PC-3 (cell line): ENCODE measurements at regions of chr2 and their contacts with region 1.

Region 1: DNA sequence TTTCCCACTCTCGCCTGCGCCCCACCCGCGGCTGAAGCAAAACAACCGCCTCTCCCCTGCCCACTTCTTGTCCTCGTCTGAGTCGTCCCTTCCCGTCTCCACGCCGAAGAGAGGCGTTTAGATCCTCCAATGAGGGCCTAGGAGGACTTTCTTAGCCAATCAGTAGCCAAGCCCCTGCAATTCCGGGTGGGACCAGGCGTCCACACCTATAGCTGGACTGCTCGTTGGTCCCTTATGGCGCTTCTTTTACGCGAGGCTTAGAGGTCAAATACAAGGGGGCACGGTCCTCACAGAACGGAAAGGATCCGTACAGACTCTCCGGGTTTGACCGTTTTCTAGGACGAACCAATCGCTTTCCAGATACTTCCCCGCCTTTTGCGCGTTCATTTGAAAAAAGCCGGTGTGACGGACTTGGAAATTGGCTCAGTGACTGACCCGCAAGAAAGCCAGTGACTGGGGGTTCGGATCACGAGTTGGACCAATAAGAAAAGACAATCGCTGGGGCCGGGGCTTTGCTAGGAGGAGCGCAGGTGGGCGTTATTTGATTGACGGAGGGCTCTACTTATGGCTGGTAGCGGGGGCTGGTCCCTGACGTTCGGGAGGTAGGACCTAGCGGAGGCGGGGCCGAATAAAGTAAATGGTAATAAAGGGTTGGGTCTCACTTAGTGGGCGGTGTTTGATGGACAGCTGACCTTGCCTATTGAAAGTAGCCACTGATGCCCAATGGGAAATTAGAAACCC is 565 bp upstream of the PPM1B start:
- DNase-seq: peak; percentile 99
- ATAC-seq: peak; percentile 84
- H3K4me3 ChIP-seq: peak overlapping the region; percentile 76
- H3K27ac ChIP-seq: peak overlapping the region; percentile 85
- H3K4me1 ChIP-seq: peaks cover 16% of the 10 kb centered on the region
- H3K27me3 ChIP-seq: no peaks in the 10 kb centered on the region
- CTCF ChIP-seq: no peak

Region 2: DNA sequence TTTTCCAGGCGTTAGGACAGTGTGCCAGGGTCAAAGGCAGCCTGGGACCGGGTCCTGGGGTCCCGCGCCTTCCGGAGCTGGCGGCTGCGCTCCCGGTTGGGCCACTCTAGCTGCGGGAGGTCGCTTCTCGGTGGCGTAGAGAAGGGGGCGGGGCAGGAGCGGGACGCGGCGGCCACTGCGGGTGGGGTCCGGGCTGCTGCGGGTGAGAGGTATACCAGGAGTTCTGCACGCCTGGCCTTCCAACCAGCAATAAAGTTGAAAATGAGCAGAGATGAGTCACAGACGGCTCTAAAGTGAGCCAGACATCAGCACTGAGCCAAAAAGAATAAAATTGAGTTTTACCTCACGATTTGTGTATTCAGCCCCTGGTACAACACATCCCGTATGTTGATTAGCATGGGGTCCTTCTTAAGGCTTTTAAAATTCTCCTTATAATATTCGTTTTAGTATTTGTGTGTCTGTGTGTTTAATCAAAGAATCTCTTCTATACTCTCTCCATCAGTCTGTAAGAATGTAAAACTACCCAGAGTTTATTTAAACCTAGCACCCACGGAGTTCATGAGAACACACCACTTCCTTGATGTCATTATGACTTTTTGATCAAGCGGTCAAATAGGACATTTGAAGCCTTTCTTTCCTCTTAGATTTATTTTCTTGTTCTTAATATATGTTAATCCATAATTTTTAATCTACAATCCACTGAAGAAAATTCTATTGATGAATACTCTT is 491.6 kb before region 1 on chr2 and contains the start of gene C1GALT1C1L:
- CTCF ChIA-PET with region 1: no interaction called
- POLR2A ChIA-PET with region 1: interaction called, 11 read pairs
- intact Hi-C with region 1: no loop called
- DNase-seq: no peak
- ATAC-seq: no peak
- H3K4me3 ChIP-seq: no peak within 1 kb of the TSS
- H3K27ac ChIP-seq: no peak within 1 kb of the TSS
- H3K4me1 ChIP-seq: no peaks in the 10 kb centered on the region
- H3K27me3 ChIP-seq: no peaks in the 10 kb centered on the region
- CTCF ChIP-seq: no peak
- total RNA-seq, gene C1GALT1C1L: not detected in 2 replicates

Region 3: DNA sequence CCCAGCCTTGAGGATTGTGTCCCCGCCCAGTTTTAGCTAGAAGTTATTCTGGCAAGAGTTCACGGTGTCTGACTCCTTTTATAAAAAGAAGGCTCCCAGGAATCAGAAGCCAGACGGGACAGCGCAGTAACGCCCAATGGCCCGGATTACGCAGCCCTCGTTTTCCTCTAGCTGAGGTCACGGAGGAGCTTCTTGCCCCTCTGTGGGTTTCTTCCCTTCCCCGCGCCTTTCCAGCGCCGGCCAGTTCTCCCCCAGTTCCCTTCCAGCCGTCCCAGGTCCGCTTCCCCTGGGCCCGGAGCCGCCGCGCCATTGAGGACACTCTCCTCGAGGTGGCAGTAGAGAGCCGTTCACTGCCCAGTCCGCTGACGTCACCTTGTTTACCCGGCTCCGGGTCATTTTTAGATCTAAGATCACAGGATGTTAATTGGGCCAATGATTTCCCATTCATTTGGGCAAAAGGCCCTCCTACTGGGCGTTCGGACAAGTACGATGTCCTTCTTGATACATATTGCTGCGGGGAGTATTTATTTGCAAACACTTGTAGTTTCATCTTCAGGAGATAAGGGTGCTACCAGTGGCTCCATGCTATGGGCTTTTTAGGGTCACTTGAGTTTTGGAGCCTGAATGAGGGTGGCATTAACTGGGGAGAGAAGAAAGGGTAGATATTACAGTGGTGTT is 80.9 kb before region 1 on chr2:
- CTCF ChIA-PET with region 1: no interaction called
- POLR2A ChIA-PET with region 1: no interaction called
- intact Hi-C with region 1: loop called (anchors 1 kb)
- DNase-seq: peak; percentile 84
- ATAC-seq: peak; percentile 97
- H3K4me3 ChIP-seq: peak overlapping the region; percentile 62
- H3K27ac ChIP-seq: no peak overlapping the region
- H3K4me1 ChIP-seq: peaks cover 6% of the 10 kb centered on the region
- H3K27me3 ChIP-seq: no peaks in the 10 kb centered on the region
- CTCF ChIP-seq: peak; percentile 96

Region 4: DNA sequence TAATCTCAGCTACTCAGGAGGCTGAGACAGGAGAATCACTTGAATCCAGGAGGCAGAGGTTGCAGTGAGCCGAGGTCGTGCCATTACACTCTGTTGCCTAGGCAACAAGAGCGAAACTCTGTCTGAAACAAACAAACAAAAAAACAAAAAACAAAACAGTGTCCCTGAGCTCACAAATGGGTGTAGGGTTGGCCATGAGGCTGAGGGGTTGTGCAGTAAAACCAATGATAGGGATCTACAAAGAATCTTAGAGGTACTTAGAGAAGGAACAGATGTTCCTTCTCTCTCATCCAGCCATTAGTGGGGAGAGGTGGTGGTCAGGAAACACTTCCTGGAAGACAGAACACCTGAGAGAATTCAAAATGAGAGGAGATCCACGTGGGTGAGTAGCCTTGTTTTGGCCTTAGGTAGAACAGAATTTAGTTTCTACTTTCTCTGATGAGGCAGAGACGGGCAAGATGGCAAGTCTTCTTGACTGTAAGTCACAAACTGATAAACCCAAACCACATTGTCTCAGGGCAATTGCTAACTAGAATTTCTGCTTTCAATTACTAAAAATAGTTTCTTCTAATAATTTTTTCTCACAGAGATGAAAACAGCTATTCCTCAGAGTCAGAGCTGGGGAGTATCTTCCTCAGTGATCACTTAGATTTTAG is 60.9 kb before region 1 on chr2:
- CTCF ChIA-PET with region 1: no interaction called
- POLR2A ChIA-PET with region 1: no interaction called
- intact Hi-C with region 1: no loop called
- DNase-seq: no peak
- ATAC-seq: no peak
- H3K4me3 ChIP-seq: no peak overlapping the region
- H3K27ac ChIP-seq: no peak overlapping the region
- H3K4me1 ChIP-seq: peaks cover 6% of the 10 kb centered on the region
- H3K27me3 ChIP-seq: no peaks in the 10 kb centered on the region
- CTCF ChIP-seq: no peak

Region 5: DNA sequence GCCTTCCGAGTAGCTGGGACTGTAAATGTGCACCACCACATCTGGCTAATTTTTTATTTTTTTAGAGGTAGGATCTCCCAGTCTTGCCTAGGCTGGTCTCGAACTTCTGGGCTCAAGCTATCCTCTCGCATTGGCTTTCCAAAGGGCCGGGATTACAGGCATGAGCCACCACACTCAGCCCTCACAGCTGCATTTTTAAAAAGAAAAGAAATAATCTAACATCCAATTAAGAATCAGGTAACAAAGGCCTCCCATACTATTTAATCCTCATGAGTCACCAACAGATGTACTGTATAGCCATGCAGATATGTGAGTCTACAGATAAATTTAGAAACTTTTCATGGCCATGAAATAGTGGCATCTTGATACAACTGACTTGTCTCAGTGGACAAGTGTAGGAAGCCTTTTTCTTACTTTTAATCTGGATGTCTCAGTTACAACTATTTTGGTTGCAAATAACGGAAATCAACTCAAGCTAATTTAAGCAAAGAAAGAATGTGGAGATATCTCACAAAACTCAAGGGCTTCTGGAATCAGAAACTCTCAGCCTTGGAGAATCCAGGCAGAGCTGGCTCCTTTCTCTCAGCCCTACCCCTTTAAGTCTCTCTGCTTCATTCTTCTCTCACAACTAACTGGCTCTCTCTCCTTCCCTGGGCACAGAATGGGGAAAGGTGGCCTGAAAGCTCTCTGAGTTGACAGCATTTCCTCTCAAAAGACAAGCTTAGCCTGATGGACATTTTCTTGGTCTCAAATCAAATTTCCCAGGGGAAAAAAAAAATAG is 12.3 kb before region 1 on chr2:
- CTCF ChIA-PET with region 1: no interaction called
- POLR2A ChIA-PET with region 1: no interaction called
- intact Hi-C with region 1: no loop called
- DNase-seq: peak; percentile 20
- ATAC-seq: peak; percentile 35
- H3K4me3 ChIP-seq: no peak overlapping the region
- H3K27ac ChIP-seq: no peak overlapping the region
- H3K4me1 ChIP-seq: no peaks in the 10 kb centered on the region
- H3K27me3 ChIP-seq: no peaks in the 10 kb centered on the region
- CTCF ChIP-seq: no peak

Region 6: DNA sequence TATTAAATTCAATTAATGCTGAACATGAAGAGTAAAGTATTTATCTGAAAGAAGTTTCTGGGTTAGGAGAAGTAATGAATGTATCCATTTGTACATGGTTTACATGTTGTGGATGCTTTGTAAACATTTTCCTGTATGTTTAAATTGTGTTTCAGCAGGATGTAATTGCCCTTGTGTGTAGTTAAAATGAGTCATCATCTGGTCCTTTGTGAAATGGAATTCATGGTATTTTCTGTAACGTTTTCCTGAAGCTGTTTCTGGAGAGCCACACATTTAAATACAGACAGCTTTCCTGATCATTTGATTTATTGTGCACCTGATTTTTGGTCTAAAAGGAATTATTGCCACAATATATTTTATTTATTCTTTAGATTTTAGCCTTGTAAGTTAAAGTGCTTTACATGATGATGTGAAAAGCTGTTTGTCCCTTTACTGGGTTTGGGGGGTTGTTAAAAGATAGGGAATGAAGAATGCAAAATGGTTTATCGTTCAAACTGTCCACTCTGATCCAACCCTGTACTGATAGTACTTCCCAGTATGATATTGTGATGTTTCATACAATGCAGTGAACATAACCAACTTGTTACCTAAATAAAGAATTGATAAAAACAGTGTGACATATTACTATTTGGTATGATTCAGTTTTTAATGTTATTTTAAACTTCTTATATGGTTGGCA is 65.5 kb after region 1 on chr2:
- CTCF ChIA-PET with region 1: no interaction called
- POLR2A ChIA-PET with region 1: interaction called, 3 read pairs
- intact Hi-C with region 1: loop called (anchors 2 kb)
- DNase-seq: peak; percentile 79
- ATAC-seq: peak; percentile 87
- H3K4me3 ChIP-seq: no peak overlapping the region
- H3K27ac ChIP-seq: no peak overlapping the region
- H3K4me1 ChIP-seq: peaks cover 23% of the 10 kb centered on the region
- H3K27me3 ChIP-seq: no peaks in the 10 kb centered on the region
- CTCF ChIP-seq: no peak

Region 7: DNA sequence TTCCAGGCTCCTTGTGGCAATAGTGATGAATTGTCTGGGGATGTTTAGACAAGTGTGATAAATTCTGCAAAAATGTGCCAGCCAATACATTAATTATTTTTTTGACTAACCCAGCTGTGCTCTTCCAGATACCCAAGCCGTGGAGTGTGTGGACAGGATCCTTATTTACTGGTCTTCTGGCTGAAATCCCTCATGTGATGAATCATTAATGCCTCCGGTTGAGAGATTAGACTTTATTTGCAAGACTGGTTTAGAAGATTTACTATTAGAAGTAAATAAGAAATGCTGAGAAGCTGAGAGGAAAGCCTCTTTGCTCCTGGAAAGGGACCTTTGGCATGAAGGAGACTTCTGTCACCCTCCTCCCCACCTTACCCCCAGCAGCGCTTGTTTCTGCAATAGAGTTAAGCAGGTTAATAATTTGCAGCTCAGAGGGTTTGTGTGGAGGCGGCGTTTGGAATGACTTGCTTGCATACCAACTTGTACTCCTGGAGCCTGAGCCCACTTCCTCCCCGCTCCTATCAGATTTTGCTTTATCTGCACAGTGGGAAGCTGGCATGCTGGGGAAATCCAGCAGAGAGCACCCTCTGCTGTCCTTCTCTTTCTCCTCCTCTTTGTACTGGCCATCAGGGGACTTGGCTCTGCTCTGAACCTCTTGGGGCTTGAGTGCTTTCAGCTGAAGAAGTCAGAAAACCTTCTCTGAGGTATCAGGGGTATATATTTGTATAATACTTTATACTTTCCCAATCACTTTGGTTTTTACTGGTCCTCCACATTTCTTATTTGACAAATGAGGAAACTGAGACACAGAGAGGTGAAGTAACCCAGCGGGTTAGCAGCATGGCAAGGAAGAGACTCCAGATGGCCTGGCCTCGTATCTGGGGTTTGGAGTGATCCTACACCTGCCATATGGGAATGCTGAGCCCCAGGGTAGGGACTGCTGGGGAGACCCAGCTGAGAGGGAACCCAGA is 123.5 kb after region 1 on chr2:
- CTCF ChIA-PET with region 1: no interaction called
- POLR2A ChIA-PET with region 1: no interaction called
- intact Hi-C with region 1: loop called (anchors 1 kb)
- DNase-seq: peak; percentile 93
- ATAC-seq: peak; percentile 81
- H3K4me3 ChIP-seq: peak overlapping the region; percentile 28; the same call in 1 of the 2 replicates
- H3K27ac ChIP-seq: peak overlapping the region; percentile 80
- H3K4me1 ChIP-seq: peaks cover 40% of the 10 kb centered on the region
- H3K27me3 ChIP-seq: no peaks in the 10 kb centered on the region
- CTCF ChIP-seq: peak; percentile 85

Region 8: GRCh38 chr2:44361330-44362206 is 193.5 kb after region 1 on chr2 and contains the starts of genes CAMKMT and PREPL:
- CTCF ChIA-PET with region 1: no interaction called
- POLR2A ChIA-PET with region 1: no interaction called
- intact Hi-C with region 1: loop called (anchors 5 kb)
- DNase-seq: peak; percentile 97
- ATAC-seq: peak; percentile 71
- H3K4me3 ChIP-seq: peak within 1 kb of the TSS; percentile 94
- H3K27ac ChIP-seq: peak within 1 kb of the TSS; percentile 88
- H3K4me1 ChIP-seq: peaks cover 26% of the 10 kb centered on the region
- H3K27me3 ChIP-seq: no peaks in the 10 kb centered on the region
- CTCF ChIP-seq: no peak
- total RNA-seq, gene CAMKMT: 2.7 and 4.3 TPM in 2 replicates
- total RNA-seq, gene PREPL: 30.2 and 36.2 TPM in 2 replicates